Psoas muscle (tissue), 8 donors: ENCODE measurements at regions of chr13 and their contacts with region 1.

Region 1: GRCh38 chr13:113208424-113209335 is at the start of gene PCID2:
- DNase-seq: peak; percentile 89 to 94
- ATAC-seq: peak; percentile 91 to 93 (median 92)
- H3K4me3 ChIP-seq: peak within 1 kb of the TSS; percentile 88
- H3K27ac ChIP-seq: peak within 1 kb of the TSS; percentile 98
- H3K4me1 ChIP-seq: peaks cover 62% of the 10 kb centered on the region
- H3K27me3 ChIP-seq: no peaks in the 10 kb centered on the region
- CTCF ChIP-seq: peak; percentile 4
- total RNA-seq, gene PCID2: 22.5 to 37.1 (median 26.4) TPM

Region 2: DNA sequence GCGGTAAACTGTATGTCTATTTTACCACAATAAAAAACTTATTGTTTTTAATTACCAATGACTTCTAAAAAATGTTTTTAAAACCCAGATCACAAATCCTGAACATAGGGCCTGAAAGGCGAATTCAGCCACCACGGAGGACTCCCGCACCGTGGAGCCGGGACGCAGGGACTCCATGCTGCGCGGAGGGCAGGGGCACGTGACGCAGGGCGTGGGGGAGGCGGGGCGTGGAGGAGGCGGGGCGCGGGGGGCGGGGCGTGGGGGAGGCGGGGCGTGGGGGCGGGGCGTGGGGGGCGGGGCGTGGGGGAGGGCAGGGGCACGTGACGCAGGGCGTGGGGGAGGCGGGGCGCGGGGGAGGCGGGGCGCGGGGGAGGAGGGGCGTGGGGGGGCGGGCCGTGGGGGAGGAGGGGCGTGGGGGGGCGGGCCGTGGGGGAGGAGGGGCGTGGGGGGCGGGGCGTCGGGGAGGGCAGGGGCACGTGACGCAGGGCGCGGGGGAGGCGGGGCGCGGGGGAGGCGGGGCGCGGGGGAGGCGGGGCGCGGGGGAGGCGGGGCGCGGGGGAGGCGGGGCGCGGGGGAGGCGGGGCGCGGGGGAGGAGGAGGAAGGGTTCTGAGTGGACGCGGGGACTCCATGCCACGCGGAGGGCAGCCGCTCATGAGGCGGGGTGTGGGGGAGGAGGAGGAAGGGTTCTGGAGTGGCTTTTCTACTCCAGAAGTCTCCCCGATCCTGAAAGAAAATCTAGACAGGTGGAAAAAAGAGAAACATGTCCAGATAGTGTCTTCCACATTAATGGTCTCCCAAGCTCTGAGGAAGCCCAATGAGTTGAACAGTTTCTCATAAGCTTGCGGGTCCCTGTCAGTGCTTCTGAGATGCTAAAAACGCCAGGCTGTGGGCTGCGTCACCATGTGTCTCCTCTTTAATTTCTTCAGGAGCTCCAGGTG is 54.6 kb before region 1 on chr13:
- intact Hi-C with region 1: loop called (anchors 5 kb)
- DNase-seq: peak; percentile 83 to 91
- ATAC-seq: peak; percentile 79 to 85 (median 82)
- H3K4me3 ChIP-seq: peak overlapping the region; percentile 68
- H3K27ac ChIP-seq: peak overlapping the region; percentile 86
- H3K4me1 ChIP-seq: peaks cover 11% of the 10 kb centered on the region
- H3K27me3 ChIP-seq: no peaks in the 10 kb centered on the region
- CTCF ChIP-seq: no peak

Region 3: GRCh38 chr13:113296842-113297369 is 88.2 kb after region 1 on chr13 and contains the start of gene LAMP1:
- intact Hi-C with region 1: loop called in 1 of 2 experiments (anchors 5 kb)
- DNase-seq: peak; percentile 100
- ATAC-seq: peak; percentile 88 to 92 (median 90)
- H3K4me3 ChIP-seq: peak within 1 kb of the TSS; percentile 98
- H3K27ac ChIP-seq: peak within 1 kb of the TSS; percentile 98
- H3K4me1 ChIP-seq: peaks cover 43% of the 10 kb centered on the region
- H3K27me3 ChIP-seq: no peaks in the 10 kb centered on the region
- CTCF ChIP-seq: no peak
- total RNA-seq, gene LAMP1: 53.7 to 71.5 (median 67.8) TPM